Activated CD4-positive, alpha-beta T cell treated with anti-CD3 and anti-CD28 coated beads for 36 hours (primary cell): ENCODE measurements at regions of chr11 and their contacts with region 1.

Region 1: DNA sequence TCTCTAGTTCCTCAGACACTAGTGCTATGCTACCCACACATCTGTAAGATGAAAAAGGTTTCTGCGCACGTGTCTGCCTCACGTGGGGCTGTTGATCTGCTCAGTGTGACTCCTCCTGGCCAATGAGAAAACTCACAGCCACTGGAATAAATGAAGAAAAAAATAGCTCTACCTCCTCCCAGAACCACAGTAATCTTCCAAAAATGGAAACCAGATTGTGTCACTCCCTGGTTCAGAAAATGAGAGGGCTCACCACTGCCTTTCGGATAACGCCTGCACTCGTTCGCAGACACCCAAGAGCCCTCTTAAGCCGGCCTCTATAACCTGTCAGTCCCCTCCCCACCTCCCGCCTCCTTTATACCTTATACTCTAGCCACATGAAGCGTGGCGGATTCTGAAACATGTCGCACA is 5.1 kb downstream of the APBB1 start:
- DNase-seq: peak; percentile 88
- ATAC-seq: peak; percentile 86
- H3K4me3 Mint-ChIP-seq: no peak overlapping the region
- H3K27ac Mint-ChIP-seq: no peak overlapping the region
- H3K4me1 Mint-ChIP-seq: peaks cover 30% of the 10 kb centered on the region
- H3K27me3 Mint-ChIP-seq: no peaks in the 10 kb centered on the region

Region 2: GRCh38 chr11:6402561-6402981 is 11.2 kb before region 1 on chr11:
- CTCF ChIA-PET with region 1: interaction called, 10 read pairs
- POLR2A ChIA-PET with region 1: interaction called, 30 read pairs
- intact Hi-C with region 1: loop called (anchors 1 kb)
- DNase-seq: peak; percentile 85
- ATAC-seq: peak; percentile 88
- H3K4me3 Mint-ChIP-seq: peak overlapping the region; percentile 65
- H3K27ac Mint-ChIP-seq: peak overlapping the region; percentile 95
- H3K4me1 Mint-ChIP-seq: peaks cover 78% of the 10 kb centered on the region
- H3K27me3 Mint-ChIP-seq: no peaks in the 10 kb centered on the region

Region 3: GRCh38 chr11:6717426-6717825 is 303.6 kb after region 1 on chr11:
- CTCF ChIA-PET with region 1: no interaction called
- POLR2A ChIA-PET with region 1: no interaction called
- intact Hi-C with region 1: no loop called
- DNase-seq: no peak
- ATAC-seq: no peak
- H3K4me3 Mint-ChIP-seq: no peak overlapping the region
- H3K27ac Mint-ChIP-seq: no peak overlapping the region
- H3K4me1 Mint-ChIP-seq: peaks cover 31% of the 10 kb centered on the region
- H3K27me3 Mint-ChIP-seq: no peaks in the 10 kb centered on the region